ENCODE measurements at regions of chr15 and their contacts with region 1.

Region 1: GRCh38 chr15:64653760-64654159 is 121.6 kb downstream of the RBPMS2 start:
- DNase-seq: no peak
- ATAC-seq: no peak
- H3K4me3 Mint-ChIP-seq: no peak overlapping the region
- H3K27ac Mint-ChIP-seq: no peak overlapping the region
- H3K4me1 Mint-ChIP-seq: peaks cover 31% of the 10 kb centered on the region
- H3K27me3 Mint-ChIP-seq: no peaks in the 10 kb centered on the region
- CTCF ChIP-seq: peak; percentile 52

Region 2: DNA sequence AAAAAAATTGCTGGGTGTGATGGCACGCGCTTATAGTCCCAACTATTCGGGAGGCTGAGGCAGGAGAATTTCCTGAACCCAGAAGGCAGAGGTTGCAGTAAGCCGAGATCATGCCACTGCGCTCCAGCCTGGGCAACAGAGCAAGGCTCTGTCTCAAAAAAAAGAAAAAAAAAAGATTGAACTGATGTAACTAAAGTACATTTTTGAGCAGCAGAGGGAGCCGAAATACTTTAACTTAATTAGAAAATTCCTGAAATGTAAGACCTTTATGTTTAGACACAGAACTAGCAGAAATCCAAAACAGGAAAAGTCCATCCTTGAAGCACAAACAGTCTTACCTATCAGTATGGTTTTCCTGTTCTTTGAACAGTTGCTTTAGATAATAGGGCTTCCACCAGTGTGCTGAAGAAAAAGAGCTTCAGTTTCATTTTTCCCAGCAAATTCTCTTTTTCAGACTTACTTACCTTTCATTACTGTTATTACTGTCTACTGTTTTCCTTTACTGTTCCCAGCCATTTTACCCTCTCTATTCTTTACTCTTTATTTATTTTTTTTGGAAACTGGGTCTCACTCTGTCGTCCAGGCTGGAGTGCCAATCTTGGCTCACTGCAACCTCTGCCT is 226.8 kb before region 1 on chr15:
- CTCF ChIA-PET with region 1: interaction called, 10 read pairs
- POLR2A ChIA-PET with region 1: no interaction called
- intact Hi-C with region 1: no loop called
- DNase-seq: no peak
- ATAC-seq: no peak
- H3K4me3 Mint-ChIP-seq: no peak overlapping the region
- H3K27ac Mint-ChIP-seq: peak overlapping the region; percentile 61
- H3K4me1 Mint-ChIP-seq: peaks cover 40% of the 10 kb centered on the region
- H3K27me3 Mint-ChIP-seq: no peaks in the 10 kb centered on the region
- CTCF ChIP-seq: peak; percentile 52

Region 3: GRCh38 chr15:64634576-64635498 is 18.9 kb before region 1 on chr15:
- CTCF ChIA-PET with region 1: interaction called, 13 read pairs
- POLR2A ChIA-PET with region 1: interaction called, 3 read pairs
- intact Hi-C with region 1: no loop called
- DNase-seq: peak; percentile 77
- ATAC-seq: peak; percentile 57
- H3K4me3 Mint-ChIP-seq: peak overlapping the region; percentile 31
- H3K27ac Mint-ChIP-seq: peak overlapping the region; percentile 82
- H3K4me1 Mint-ChIP-seq: peaks cover 64% of the 10 kb centered on the region
- H3K27me3 Mint-ChIP-seq: no peaks in the 10 kb centered on the region
- CTCF ChIP-seq: no peak

Region 4: DNA sequence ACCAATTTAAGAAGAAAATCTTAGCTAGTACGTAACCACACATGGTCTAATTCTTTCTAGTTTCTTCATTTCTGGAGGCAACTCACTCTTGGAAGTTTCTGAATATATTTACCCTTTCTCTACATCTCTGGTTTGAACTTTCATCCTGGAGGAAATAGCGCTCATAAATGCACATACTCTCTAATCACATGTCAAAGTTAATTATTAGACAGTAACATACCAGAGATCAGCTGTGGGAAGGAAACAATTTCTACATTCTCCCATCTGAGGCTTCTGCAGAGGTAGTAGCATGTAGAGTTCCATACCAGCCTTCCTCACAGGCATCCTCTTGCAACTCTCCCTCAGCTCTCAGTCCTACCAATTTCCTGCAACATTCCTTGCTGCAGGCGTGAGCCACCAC is 10.9 kb before region 1 on chr15:
- CTCF ChIA-PET with region 1: interaction called, 15 read pairs
- POLR2A ChIA-PET with region 1: interaction called, 3 read pairs
- intact Hi-C with region 1: no loop called
- DNase-seq: no peak
- ATAC-seq: no peak
- H3K4me3 Mint-ChIP-seq: no peak overlapping the region
- H3K27ac Mint-ChIP-seq: no peak overlapping the region
- H3K4me1 Mint-ChIP-seq: peaks cover 34% of the 10 kb centered on the region
- H3K27me3 Mint-ChIP-seq: no peaks in the 10 kb centered on the region
- CTCF ChIP-seq: no peak

Region 5: GRCh38 chr15:64703647-64703988 is 49.9 kb after region 1 on chr15:
- CTCF ChIA-PET with region 1: no interaction called
- POLR2A ChIA-PET with region 1: no interaction called
- intact Hi-C with region 1: no loop called
- DNase-seq: no peak
- ATAC-seq: peak; percentile 4
- H3K4me3 Mint-ChIP-seq: peak overlapping the region; percentile 70
- H3K27ac Mint-ChIP-seq: peak overlapping the region; percentile 76
- H3K4me1 Mint-ChIP-seq: peaks cover 42% of the 10 kb centered on the region
- H3K27me3 Mint-ChIP-seq: no peaks in the 10 kb centered on the region
- CTCF ChIP-seq: no peak

Region 6: DNA sequence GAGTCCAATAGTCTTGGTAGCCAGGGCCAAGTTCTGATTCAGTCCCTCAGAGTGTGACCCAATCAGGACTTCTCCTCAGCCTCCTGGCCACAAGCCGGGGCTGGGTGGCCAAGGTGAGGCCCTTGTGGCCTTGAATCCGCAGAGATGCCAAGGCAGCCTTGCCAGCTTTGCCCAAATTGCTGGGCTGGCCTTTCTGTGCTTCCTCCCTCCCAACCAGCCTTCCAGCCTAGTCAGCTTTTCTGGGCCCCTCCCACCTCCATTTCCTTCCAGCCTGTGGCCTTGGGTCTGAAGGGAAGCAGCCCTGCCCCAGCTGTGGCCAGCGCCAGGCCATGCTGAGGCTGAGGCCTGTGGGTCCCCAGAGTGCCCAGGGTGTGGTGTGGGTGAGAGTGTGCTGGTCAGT is 223.7 kb after region 1 on chr15:
- CTCF ChIA-PET with region 1: no interaction called
- POLR2A ChIA-PET with region 1: no interaction called
- intact Hi-C with region 1: no loop called
- DNase-seq: no peak
- ATAC-seq: no peak
- H3K4me3 Mint-ChIP-seq: no peak overlapping the region
- H3K27ac Mint-ChIP-seq: no peak overlapping the region
- H3K4me1 Mint-ChIP-seq: peaks cover 10% of the 10 kb centered on the region
- H3K27me3 Mint-ChIP-seq: no peaks in the 10 kb centered on the region
- CTCF ChIP-seq: no peak

Measured in activated CD8-positive, alpha-beta T cell treated with anti-CD3 and anti-CD28 coated beads for 36 hours (primary cell).